Lower lobe of right lung (tissue), 2 donors: ENCODE measurements at regions of chr15 and their contacts with region 1.

Region 1: DNA sequence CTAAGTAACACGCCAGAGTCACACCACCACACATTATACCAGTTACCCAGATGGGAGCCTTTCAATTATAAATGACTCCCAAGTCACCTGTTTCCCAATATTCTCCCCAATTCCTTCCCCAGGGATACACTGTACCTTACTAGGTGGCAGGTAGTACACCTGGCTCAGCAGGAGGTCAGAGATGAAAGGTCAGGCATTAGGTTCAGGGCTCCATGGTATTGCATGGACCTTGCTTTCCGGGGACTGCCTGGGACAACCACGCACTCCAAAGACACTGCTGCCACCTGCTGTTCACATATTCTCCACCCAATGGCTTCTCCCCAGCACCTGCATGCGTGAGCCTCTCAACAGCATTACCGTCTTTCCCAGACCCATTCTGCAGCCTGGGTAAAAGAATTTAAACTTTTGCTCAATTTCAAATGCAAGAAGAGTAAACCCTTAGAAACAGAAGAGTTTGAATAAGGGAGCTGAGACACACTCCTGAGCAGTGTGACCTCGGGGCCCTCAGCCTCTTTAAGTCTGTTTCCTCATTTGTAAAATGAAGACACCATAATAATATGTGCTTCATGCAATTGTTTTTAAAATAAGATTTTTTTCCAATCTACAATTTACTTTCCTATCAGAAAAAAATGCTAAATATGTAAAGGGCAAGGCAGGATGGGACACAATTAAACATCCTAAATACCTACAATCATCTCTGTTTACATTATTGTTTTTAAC is 28.0 kb upstream of the LACTB start:
- DNase-seq: peak; percentile 77
- ATAC-seq: peak; percentile 94 to 96
- H3K4me3 ChIP-seq: no peak overlapping the region
- H3K27ac ChIP-seq: no peak overlapping the region
- H3K4me1 ChIP-seq: peaks cover 14% of the 10 kb centered on the region
- H3K27me3 ChIP-seq: no peaks in the 10 kb centered on the region
- CTCF ChIP-seq: peak; percentile 90

Region 2: DNA sequence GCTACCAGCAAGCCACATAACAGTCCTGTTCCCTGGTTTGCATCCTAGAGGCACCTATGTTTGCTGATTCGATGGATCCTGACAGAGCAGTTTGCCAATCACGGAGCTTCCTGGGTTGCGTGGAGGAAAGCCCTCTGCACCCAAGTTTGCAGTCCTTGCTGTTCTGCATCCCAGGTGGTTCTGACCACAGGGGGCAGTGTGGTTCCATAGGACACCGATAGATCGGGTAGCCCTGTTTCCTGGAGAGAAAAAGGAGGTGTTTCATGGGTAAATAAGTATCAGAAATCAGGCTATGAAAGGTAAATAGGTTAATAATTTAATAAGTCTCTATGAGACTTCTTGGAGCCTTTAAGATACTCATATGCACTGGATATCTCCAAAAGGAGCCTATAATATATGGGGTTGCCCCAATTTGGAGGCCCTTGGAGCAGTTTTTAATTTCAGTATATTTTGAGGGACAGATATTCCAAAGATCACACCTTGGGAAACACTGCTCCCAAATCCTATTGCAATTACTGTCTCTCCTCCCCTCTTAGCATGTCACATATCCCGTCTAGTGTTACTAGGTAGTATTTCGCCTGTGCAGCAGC is 245.7 kb before region 1 on chr15:
- intact Hi-C with region 1: loop called (anchors 10 kb)
- DNase-seq: peak; percentile 57
- ATAC-seq: peak; percentile 59
- H3K4me3 ChIP-seq: no peak overlapping the region
- H3K27ac ChIP-seq: no peak overlapping the region
- H3K4me1 ChIP-seq: peaks cover 7% of the 10 kb centered on the region
- H3K27me3 ChIP-seq: no peaks in the 10 kb centered on the region
- CTCF ChIP-seq: peak; percentile 63